Transverse colon (tissue), 4 donors: ENCODE measurements at regions of chr10 and their contacts with region 1.

Region 1: GRCh38 chr10:82149674-82150073 is 274.7 kb downstream of the NRG3 start:
- DNase-seq: no peak
- H3K4me3 ChIP-seq: no peak overlapping the region
- H3K27ac ChIP-seq: no peak overlapping the region
- H3K4me1 ChIP-seq: no peaks in the 10 kb centered on the region
- H3K27me3 ChIP-seq: no peaks in the 10 kb centered on the region
- CTCF ChIP-seq: no peak
- EP300 ChIP-seq: no peak
- POLR2A ChIP-seq: no peak

Region 2: GRCh38 chr10:81679291-81679690 is 470.4 kb before region 1 on chr10:
- in situ Hi-C with region 1: no loop called
- intact Hi-C with region 1: loop called (anchors 5 kb)
- DNase-seq: no peak
- H3K4me3 ChIP-seq: no peak overlapping the region
- H3K27ac ChIP-seq: no peak overlapping the region
- H3K4me1 ChIP-seq: no peaks in the 10 kb centered on the region
- H3K27me3 ChIP-seq: no peaks in the 10 kb centered on the region
- CTCF ChIP-seq: no peak
- EP300 ChIP-seq: no peak
- POLR2A ChIP-seq: no peak

Region 3: GRCh38 chr10:82840263-82840662 is 690.6 kb after region 1 on chr10:
- in situ Hi-C with region 1: no loop called
- intact Hi-C with region 1: no loop called
- DNase-seq: no peak
- H3K4me3 ChIP-seq: no peak overlapping the region
- H3K27ac ChIP-seq: no peak overlapping the region
- H3K4me1 ChIP-seq: no peaks in the 10 kb centered on the region
- H3K27me3 ChIP-seq: no peaks in the 10 kb centered on the region
- CTCF ChIP-seq: no peak
- EP300 ChIP-seq: no peak
- POLR2A ChIP-seq: no peak